OCI-LY7 (cell line): ENCODE measurements at regions of chr12 and their contacts with region 1.

Region 1: GRCh38 chr12:55738123-55739024 is 4.5 kb upstream of the GDF11 start:
- DNase-seq: peak; percentile 96
- H3K4me3 ChIP-seq: peak overlapping the region; percentile 72
- H3K27ac ChIP-seq: peak overlapping the region; percentile 66
- H3K4me1 ChIP-seq: peaks cover 26% of the 10 kb centered on the region
- CTCF ChIP-seq: peak; percentile 94

Region 2: DNA sequence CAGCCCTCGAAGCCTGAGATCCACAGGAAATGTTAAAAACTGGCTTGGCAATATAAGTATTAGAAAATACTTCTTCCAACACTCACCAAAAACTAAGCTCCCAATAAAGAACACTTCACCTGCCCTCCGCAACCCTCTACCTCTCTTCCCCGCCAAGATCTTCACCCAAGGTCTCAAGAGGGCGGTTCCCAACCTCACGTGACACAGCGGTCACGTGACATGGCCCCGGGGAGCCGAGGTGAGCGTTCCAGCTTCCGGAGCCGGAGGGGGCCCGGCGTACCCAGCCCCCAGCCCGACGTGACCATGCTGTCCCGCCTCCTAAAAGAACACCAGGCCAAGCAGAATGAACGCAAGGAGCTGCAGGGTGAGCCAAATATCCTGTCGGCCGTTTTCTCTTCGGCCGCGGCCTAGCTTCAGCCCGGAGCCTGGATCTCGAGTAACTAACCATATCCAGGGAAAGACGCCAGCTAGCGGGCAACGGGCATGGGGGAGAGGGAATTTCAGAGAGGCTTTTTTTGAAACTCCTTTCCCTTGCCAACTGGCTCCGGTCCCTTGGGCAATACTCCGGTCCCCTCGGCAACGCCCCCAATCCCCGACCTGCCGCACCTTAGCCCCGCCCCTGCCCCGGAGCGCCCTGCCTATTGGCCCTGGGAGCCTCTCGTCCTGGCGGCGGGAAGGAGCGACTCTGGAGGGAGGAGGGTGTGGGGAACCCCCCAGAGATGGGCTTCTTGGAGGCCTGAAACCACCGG is 22.4 kb before region 1 on chr12 and contains the start of gene BLOC1S1:
- CTCF ChIA-PET with region 1: interaction called, 3 read pairs
- POLR2A ChIA-PET with region 1: interaction called, 14 read pairs
- intact Hi-C with region 1: no loop called
- DNase-seq: peak; percentile 97
- H3K4me3 ChIP-seq: peak within 1 kb of the TSS; percentile 77
- H3K27ac ChIP-seq: peak within 1 kb of the TSS; percentile 81
- H3K4me1 ChIP-seq: peaks cover 28% of the 10 kb centered on the region
- CTCF ChIP-seq: no peak
- total RNA-seq, gene BLOC1S1: 139 and 161 TPM in 2 replicates

Region 3: GRCh38 chr12:55817346-55818139 is 79.2 kb after region 1 on chr12 and contains the starts of genes ORMDL2 and SARNP:
- CTCF ChIA-PET with region 1: interaction called, 6 read pairs
- POLR2A ChIA-PET with region 1: interaction called, 12 read pairs
- intact Hi-C with region 1: loop called (anchors 2 kb)
- DNase-seq: peak; percentile 100
- H3K4me3 ChIP-seq: peak within 1 kb of the TSS; percentile 97
- H3K27ac ChIP-seq: peak within 1 kb of the TSS; percentile 55
- H3K4me1 ChIP-seq: peaks cover 32% of the 10 kb centered on the region
- CTCF ChIP-seq: no peak
- total RNA-seq, gene ORMDL2: 13.4 and 20.0 TPM in 2 replicates
- total RNA-seq, gene SARNP: 86.1 and 161 TPM in 2 replicates

Region 4: GRCh38 chr12:56029666-56030293 is 291.4 kb after region 1 on chr12:
- CTCF ChIA-PET with region 1: interaction called, 3 read pairs
- POLR2A ChIA-PET with region 1: no interaction called
- intact Hi-C with region 1: loop called (anchors 1 kb)
- DNase-seq: peak; percentile 66
- H3K4me3 ChIP-seq: no peak overlapping the region
- H3K27ac ChIP-seq: no peak overlapping the region
- H3K4me1 ChIP-seq: no peaks in the 10 kb centered on the region
- CTCF ChIP-seq: peak; percentile 88